GM23248 (cell line): ENCODE measurements at regions of chr1 and their contacts with region 1.

Region 1: GRCh38 chr1:34597877-34598514 is 156.9 kb upstream of the GJB5 start:
- DNase-seq: peak; percentile 76
- H3K4me3 ChIP-seq: no peak overlapping the region
- H3K27ac ChIP-seq: no peak overlapping the region
- H3K4me1 ChIP-seq: no peaks in the 10 kb centered on the region
- H3K27me3 ChIP-seq: peaks cover 53% of the 10 kb centered on the region

Region 2: DNA sequence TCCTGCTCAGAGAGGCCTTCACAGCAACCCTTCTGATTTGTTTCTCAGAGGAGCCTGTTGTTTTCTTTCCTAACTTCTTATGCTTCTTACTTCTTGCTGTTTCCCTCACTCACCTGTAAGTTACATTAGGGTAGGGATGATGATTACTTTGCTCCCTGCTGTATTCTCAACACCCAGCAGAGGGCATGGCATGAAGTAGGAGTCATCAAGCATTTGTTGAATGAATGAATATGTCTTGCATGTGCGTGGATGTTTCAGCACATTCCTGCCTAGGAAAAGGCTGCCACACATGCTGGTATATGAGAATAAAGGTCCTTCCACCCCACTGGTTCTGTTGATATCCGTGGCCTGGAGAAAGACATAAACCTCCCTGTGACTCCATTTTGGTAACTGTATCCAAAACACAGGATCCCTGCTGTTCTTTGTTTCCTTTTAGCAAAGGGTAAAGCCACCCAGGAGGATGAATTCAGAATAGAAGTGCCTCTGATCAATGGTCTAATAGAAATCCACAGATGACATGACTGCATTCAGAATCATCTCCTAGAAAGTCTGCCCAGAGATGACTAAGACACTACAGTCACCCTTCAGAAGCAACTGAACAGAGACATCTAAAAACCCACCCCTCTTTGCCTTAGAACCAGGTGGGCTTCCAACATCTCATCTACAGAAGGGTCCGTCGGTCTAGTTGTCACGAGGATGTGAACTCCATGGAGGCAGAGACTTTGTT is 956.7 kb before region 1 on chr1:
- in situ Hi-C with region 1: loop called (anchors 10 kb)
- DNase-seq: peak; percentile 81
- H3K4me3 ChIP-seq: no peak overlapping the region
- H3K27ac ChIP-seq: peak overlapping the region; percentile 42
- H3K4me1 ChIP-seq: peaks cover 35% of the 10 kb centered on the region
- H3K27me3 ChIP-seq: no peaks in the 10 kb centered on the region

Region 3: DNA sequence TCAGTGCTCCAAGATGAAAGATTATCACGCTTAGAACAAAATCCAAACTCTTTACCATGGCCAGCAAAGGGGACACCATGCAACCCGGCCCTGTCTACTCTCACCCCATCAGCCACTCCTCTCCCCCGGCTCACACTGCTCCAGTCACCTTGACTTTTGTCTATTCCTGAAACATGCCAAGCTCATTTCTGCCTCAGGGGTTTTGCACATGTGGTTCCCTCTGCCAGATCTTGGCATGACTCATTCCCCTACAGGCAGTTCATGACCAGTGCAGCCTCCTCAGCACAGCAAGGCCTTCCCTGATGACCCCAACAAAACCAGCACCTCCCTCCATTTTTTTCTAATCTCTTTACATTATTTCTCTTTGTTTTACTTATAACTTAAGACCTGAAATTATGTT is 98.2 kb after region 1 on chr1:
- in situ Hi-C with region 1: no loop called
- DNase-seq: peak; percentile 44
- H3K4me3 ChIP-seq: no peak overlapping the region
- H3K27ac ChIP-seq: no peak overlapping the region
- H3K4me1 ChIP-seq: no peaks in the 10 kb centered on the region
- H3K27me3 ChIP-seq: peaks cover 14% of the 10 kb centered on the region